Activated CD4-positive, alpha-beta T cell treated with anti-CD3 and anti-CD28 coated beads for 36 hours (primary cell): ENCODE measurements at regions of chr1 and their contacts with region 1.

Region 1: DNA sequence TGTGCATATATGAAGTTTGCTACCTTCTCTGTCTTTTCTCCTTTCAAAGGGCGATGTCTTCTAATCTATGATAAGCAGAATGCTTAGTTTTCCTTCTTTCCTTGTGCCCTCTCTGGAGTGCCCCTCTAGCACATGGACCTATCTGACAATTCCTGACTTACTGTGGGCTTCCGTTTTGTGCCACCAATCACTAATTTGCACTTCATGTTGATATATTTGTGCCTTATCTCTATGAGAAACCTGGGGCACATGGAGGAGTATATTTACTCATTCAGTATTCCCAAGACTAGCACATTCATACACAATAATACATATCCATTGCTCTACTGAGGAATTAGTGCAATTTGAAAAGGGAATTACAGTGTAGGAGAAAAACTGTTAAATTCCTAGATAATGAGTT is 197.7 kb downstream of the CTH start:
- DNase-seq: no peak
- ATAC-seq: no peak
- H3K4me3 Mint-ChIP-seq: no peak overlapping the region
- H3K27ac Mint-ChIP-seq: no peak overlapping the region
- H3K4me1 Mint-ChIP-seq: no peaks in the 10 kb centered on the region
- H3K27me3 Mint-ChIP-seq: peaks cover 3% of the 10 kb centered on the region

Region 2: DNA sequence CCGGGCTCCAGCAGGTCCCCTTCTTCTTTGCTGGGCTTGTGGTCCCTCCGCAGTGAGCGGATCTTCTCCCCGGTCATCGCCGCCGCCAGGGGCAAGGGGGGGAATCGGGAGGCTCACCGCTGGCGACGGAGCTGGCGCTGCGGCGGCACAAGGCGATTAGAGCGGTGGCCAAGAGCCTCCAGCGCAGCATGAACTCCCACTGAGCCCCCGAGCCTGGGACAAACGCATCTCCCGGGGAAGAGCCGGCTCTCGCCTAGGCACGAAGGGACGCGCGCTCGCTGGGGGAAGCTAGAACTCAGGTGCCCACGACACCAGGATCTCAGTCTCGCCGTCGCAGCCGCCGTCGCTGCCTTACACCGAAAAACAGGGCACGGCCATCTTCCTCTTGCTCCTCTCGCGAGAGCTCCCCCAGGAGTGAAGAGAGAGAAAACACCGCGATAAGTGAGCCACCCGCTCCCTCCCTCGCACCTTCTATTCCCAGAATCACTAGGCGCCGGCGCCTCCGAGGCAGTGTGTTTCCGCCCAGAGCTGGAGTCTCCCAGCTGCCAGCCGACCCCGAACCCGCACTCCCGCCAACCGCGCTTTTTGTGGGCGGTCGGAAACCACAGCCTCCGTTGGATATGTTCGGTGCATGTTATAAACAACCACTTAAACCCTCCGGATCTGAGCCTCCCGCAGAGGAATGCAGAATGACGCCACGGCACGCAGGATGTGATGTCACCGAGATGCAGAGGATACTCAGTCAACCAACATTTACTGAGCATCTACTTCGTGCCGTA is 254.3 kb before region 1 on chr1 and contains the start of gene ANKRD13C:
- CTCF ChIA-PET with region 1: no interaction called
- POLR2A ChIA-PET with region 1: no interaction called
- intact Hi-C with region 1: no loop called
- DNase-seq: peak; percentile 95
- ATAC-seq: peak; percentile 96
- H3K4me3 Mint-ChIP-seq: peak within 1 kb of the TSS; percentile 91
- H3K27ac Mint-ChIP-seq: peak within 1 kb of the TSS; percentile 100
- H3K4me1 Mint-ChIP-seq: peaks cover 33% of the 10 kb centered on the region
- H3K27me3 Mint-ChIP-seq: no peaks in the 10 kb centered on the region
- total RNA-seq, gene ANKRD13C: 13.9 TPM

Region 3: GRCh38 chr1:70627910-70628309 is 19.1 kb after region 1 on chr1:
- CTCF ChIA-PET with region 1: no interaction called
- POLR2A ChIA-PET with region 1: no interaction called
- intact Hi-C with region 1: no loop called
- DNase-seq: no peak
- ATAC-seq: no peak
- H3K4me3 Mint-ChIP-seq: no peak overlapping the region
- H3K27ac Mint-ChIP-seq: no peak overlapping the region
- H3K4me1 Mint-ChIP-seq: no peaks in the 10 kb centered on the region
- H3K27me3 Mint-ChIP-seq: peaks cover 2% of the 10 kb centered on the region

Region 4: GRCh38 chr1:70685300-70686241 is 76.8 kb after region 1 on chr1:
- CTCF ChIA-PET with region 1: no interaction called
- POLR2A ChIA-PET with region 1: interaction called, 11 read pairs
- intact Hi-C with region 1: no loop called
- DNase-seq: peak; percentile 61
- ATAC-seq: peak; percentile 80
- H3K4me3 Mint-ChIP-seq: no peak overlapping the region
- H3K27ac Mint-ChIP-seq: no peak overlapping the region
- H3K4me1 Mint-ChIP-seq: no peaks in the 10 kb centered on the region
- H3K27me3 Mint-ChIP-seq: peaks cover 4% of the 10 kb centered on the region